Activated B cell treated with CpG ODN at 0.5 μM for 24 hours (primary cell): ENCODE measurements at regions of chr11 and their contacts with region 1.

Region 1: GRCh38 chr11:1572197-1573076 is at the start of gene DUSP8:
- DNase-seq: peak; percentile 89
- ATAC-seq: peak; percentile 43
- H3K4me3 Mint-ChIP-seq: peak within 1 kb of the TSS; percentile 64
- H3K27ac Mint-ChIP-seq: no peak within 1 kb of the TSS
- H3K4me1 Mint-ChIP-seq: peaks cover 12% of the 10 kb centered on the region
- H3K27me3 Mint-ChIP-seq: peaks cover 22% of the 10 kb centered on the region
- CTCF ChIP-seq: no peak
- total RNA-seq, gene DUSP8: 1.3 and 1.7 TPM in 2 replicates

Region 2: GRCh38 chr11:910589-911195 is 661.7 kb before region 1 on chr11 and contains the start of gene CHID1:
- CTCF ChIA-PET with region 1: no interaction called
- POLR2A ChIA-PET with region 1: no interaction called
- intact Hi-C with region 1: loop called (anchors 5 kb)
- DNase-seq: peak; percentile 91
- ATAC-seq: peak; percentile 95
- H3K4me3 Mint-ChIP-seq: peak within 1 kb of the TSS; percentile 90
- H3K27ac Mint-ChIP-seq: peak within 1 kb of the TSS; percentile 72
- H3K4me1 Mint-ChIP-seq: peaks cover 31% of the 10 kb centered on the region
- H3K27me3 Mint-ChIP-seq: no peaks in the 10 kb centered on the region
- CTCF ChIP-seq: no peak
- total RNA-seq, gene CHID1: 43.9 and 45.7 TPM in 2 replicates

Region 3: DNA sequence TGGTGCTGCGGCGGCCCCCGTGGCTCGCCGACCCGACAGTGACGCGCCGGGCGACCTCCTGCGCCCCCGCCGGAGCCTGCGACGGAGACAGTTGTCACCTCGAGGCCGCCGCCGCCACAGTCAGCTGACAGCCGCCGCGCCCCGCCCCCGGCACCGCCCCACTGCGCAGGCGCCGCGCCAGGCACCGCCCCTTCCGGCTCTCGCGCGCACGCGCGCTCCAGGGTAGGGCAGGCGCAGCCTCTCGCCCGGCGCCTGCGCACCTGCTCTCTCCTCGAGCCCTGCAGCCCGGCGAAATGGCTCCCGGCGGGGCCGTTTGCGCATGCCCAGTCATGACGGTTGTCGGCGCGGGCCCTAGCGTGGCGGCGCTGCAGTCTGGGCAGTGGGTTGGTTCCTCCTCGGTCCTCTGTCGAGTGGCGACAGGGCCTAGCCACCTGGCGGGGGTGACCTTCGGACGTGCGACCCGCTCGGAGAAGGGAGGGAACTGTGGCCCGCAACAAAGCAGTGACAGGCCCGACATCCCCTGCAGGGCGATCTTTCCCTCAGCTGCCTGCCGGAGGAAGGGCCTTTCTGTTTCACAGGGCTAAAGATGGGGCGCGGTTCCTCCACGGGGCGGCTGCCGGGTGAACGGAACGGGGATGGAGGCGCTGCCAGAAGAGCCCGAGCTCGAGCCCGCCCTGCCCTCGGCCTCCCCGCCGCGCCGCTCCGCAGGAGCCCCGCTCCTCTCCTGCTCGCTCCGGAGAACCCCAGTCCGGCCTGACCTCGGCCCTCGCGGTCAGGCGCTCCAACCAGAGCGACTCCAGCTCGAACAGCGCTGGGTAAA is 262.7 kb before region 1 on chr11 and contains the start of gene TOLLIP:
- CTCF ChIA-PET with region 1: no interaction called
- POLR2A ChIA-PET with region 1: interaction called, 3 read pairs
- intact Hi-C with region 1: loop called (anchors 1 kb)
- DNase-seq: peak; percentile 100
- ATAC-seq: peak; percentile 68
- H3K4me3 Mint-ChIP-seq: peak within 1 kb of the TSS; percentile 87
- H3K27ac Mint-ChIP-seq: peak within 1 kb of the TSS; percentile 99
- H3K4me1 Mint-ChIP-seq: peaks cover 53% of the 10 kb centered on the region
- H3K27me3 Mint-ChIP-seq: no peaks in the 10 kb centered on the region
- CTCF ChIP-seq: no peak
- total RNA-seq, gene TOLLIP: 40.5 and 46.4 TPM in 2 replicates

Region 4: GRCh38 chr11:1458340-1459218 is 113.9 kb before region 1 on chr11:
- CTCF ChIA-PET with region 1: interaction called, 3 read pairs
- POLR2A ChIA-PET with region 1: no interaction called
- intact Hi-C with region 1: loop called (anchors 1 kb)
- DNase-seq: no peak
- ATAC-seq: no peak
- H3K4me3 Mint-ChIP-seq: no peak overlapping the region
- H3K27ac Mint-ChIP-seq: no peak overlapping the region
- H3K4me1 Mint-ChIP-seq: no peaks in the 10 kb centered on the region
- H3K27me3 Mint-ChIP-seq: no peaks in the 10 kb centered on the region
- CTCF ChIP-seq: no peak

Region 5: DNA sequence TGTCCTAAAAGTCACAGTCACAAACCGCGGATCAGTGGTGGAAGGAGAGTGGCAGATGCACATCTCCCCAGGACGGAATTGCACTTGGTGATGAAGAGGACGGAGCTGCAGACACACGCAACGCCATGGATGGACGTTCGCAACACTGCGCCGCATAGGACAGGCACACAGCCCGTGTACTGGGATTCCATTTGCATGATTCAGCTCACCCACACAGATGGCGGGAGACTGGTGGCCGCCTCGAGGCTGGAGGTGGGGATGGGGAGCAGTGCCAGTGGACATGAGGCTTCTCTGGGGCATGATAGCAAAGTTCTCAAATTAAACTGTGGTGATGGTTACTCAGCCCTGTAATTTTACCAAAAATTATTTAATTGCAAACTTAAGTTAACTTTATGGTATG is 37.8 kb before region 1 on chr11:
- CTCF ChIA-PET with region 1: interaction called, 3 read pairs
- POLR2A ChIA-PET with region 1: no interaction called
- intact Hi-C with region 1: loop called (anchors 5 kb)
- DNase-seq: no peak
- ATAC-seq: no peak
- H3K4me3 Mint-ChIP-seq: no peak overlapping the region
- H3K27ac Mint-ChIP-seq: no peak overlapping the region
- H3K4me1 Mint-ChIP-seq: peaks cover 21% of the 10 kb centered on the region
- H3K27me3 Mint-ChIP-seq: peaks cover 10% of the 10 kb centered on the region
- CTCF ChIP-seq: no peak

Region 6: DNA sequence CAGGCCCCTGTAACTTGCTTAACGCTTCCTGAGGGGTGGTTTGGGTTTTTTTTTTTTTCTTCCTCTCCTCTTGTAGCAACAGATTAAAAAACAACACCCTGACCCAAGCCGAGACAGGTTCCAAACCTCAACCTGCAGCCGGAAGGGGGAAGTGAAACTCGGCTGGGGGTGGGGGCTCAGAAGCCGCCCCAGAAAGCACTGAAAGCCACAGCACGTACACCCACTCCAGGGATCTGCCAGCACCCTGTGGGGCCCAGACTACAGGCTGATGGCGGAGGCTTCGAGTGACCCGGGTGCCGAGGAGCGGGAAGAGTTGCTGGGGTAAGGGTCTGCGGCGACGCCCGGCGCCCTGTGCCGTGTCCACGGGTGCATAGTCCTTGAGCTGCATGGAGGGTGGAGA is 280.4 kb after region 1 on chr11 and contains the start of gene LSP1:
- CTCF ChIA-PET with region 1: no interaction called
- POLR2A ChIA-PET with region 1: interaction called, 3 read pairs
- intact Hi-C with region 1: loop called (anchors 5 kb)
- DNase-seq: peak; percentile 83
- ATAC-seq: peak; percentile 64
- H3K4me3 Mint-ChIP-seq: peak within 1 kb of the TSS; percentile 99
- H3K27ac Mint-ChIP-seq: peak within 1 kb of the TSS; percentile 98
- H3K4me1 Mint-ChIP-seq: peaks cover 84% of the 10 kb centered on the region
- H3K27me3 Mint-ChIP-seq: no peaks in the 10 kb centered on the region
- CTCF ChIP-seq: no peak
- total RNA-seq, gene LSP1: 301 and 303 TPM in 2 replicates